ENCODE measurements at regions of chr15 and their contacts with region 1.

Region 1: GRCh38 chr15:77821188-77821958 is 188.7 kb upstream of the LINGO1 start:
- DNase-seq: peak; percentile 82
- ATAC-seq: peak; percentile 72
- H3K4me3 Mint-ChIP-seq: peak overlapping the region; percentile 52; the same call in 1 of the 2 replicates
- H3K27ac Mint-ChIP-seq: no peak overlapping the region
- H3K4me1 Mint-ChIP-seq: peaks cover 29% of the 10 kb centered on the region
- H3K27me3 Mint-ChIP-seq: peaks cover 46% of the 10 kb centered on the region
- CTCF ChIP-seq: peak; percentile 42; the same call in 1 of the 2 replicates

Region 2: DNA sequence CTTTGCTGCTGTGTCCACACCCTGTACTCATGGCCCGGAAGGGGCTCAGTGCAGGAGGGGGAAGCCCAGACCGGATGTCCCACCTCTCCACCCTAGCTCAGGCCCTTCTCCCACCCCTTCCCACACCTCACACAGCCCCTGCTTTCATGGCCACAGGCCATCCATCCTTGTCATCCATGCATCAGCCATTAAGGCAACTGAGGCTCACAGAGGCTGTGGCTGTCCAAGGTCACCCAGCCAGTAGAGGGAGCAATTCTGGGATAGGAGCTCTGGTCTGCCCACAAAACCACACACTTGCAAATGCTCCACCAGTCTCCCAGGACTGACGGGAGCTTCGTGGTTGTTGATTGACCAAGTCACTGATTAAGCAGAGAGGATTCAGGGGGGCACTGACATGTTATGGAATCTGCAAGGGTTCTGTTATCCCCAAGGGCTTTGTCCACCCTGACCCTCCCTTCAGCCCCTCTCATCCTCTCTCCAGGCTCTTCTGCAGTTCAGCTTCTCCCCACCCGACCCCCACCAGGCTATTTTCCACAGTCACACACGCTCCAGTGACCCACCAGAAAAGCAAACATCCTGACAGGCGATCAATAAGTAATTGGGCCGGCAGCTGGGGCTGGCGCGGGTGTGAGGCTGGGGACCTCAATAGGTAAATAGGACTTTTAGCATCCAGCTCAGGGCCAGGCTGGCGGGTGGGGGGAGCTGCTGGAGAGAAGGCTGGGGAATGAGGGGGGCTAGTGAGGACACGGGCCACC is 203.7 kb before region 1 on chr15:
- CTCF ChIA-PET with region 1: interaction called, 30 read pairs
- POLR2A ChIA-PET with region 1: no interaction called
- DNase-seq: peak; percentile 56
- ATAC-seq: peak; percentile 49
- H3K4me3 Mint-ChIP-seq: no peak overlapping the region
- H3K27ac Mint-ChIP-seq: no peak overlapping the region; the same call in 1 of the 2 replicates
- H3K4me1 Mint-ChIP-seq: peaks cover 41% of the 10 kb centered on the region
- H3K27me3 Mint-ChIP-seq: no peaks in the 10 kb centered on the region; the same call in 1 of the 2 replicates
- CTCF ChIP-seq: peak; percentile 19; the same call in 1 of the 2 replicates

Region 3: DNA sequence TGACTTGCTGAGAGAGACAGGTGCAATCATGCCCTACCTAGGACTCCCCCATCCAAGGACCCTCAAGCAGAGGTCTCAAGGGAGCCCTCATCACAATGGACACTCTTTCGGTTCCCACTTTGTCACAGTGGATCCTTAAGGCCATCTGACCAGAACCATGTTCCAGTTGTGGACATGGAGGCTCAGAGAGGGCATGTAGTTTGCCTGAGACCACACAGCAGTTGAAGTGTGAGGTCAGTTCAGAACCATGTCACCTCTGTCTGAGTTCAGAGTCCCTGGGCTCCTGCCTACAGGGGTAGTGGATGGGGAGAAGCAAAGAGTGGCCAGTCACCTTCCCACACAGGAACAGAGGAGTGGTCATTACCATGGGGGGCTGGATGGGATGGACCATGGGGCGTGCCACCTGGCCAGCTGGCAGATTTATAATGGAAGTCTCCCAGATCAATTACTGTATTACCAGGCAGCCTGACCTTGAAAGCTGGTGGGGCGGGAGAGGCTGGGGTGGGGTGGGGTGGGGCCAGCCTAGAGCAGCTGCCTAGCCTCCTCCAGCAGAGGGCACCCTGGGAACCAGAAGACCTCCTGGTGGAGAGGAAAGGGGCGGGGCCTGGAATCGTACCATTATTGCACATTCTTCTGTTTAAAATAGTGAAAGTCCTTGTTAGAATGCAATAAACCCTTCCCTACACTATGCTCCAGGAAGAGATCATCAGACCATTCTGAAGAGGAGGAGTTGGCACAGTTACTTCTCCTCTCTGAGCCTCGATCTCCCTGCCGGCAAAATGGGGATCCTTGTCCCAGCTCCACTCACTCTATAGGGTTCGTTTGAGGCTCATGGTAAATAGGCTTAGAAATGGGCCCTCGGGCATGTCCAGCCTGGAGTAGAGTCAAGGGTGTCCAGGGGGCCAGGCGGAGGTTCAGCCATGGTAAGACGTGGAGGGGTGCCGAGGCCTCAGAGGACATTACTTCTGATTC is 161.7 kb before region 1 on chr15:
- CTCF ChIA-PET with region 1: interaction called, 131 read pairs
- POLR2A ChIA-PET with region 1: no interaction called
- DNase-seq: peak; percentile 77
- ATAC-seq: peak; percentile 46
- H3K4me3 Mint-ChIP-seq: no peak overlapping the region
- H3K27ac Mint-ChIP-seq: no peak overlapping the region
- H3K4me1 Mint-ChIP-seq: peaks cover 29% of the 10 kb centered on the region
- H3K27me3 Mint-ChIP-seq: no peaks in the 10 kb centered on the region; the same call in 1 of the 2 replicates
- CTCF ChIP-seq: no peak

Region 4: GRCh38 chr15:77738441-77739302 is 82.7 kb before region 1 on chr15:
- CTCF ChIA-PET with region 1: interaction called, 25 read pairs
- POLR2A ChIA-PET with region 1: no interaction called
- DNase-seq: peak; percentile 40
- ATAC-seq: peak; percentile 10
- H3K4me3 Mint-ChIP-seq: peak overlapping the region; percentile 52
- H3K27ac Mint-ChIP-seq: no peak overlapping the region
- H3K4me1 Mint-ChIP-seq: peaks cover 46% of the 10 kb centered on the region
- H3K27me3 Mint-ChIP-seq: no peaks in the 10 kb centered on the region; the same call in 1 of the 2 replicates
- CTCF ChIP-seq: no peak

Region 5: DNA sequence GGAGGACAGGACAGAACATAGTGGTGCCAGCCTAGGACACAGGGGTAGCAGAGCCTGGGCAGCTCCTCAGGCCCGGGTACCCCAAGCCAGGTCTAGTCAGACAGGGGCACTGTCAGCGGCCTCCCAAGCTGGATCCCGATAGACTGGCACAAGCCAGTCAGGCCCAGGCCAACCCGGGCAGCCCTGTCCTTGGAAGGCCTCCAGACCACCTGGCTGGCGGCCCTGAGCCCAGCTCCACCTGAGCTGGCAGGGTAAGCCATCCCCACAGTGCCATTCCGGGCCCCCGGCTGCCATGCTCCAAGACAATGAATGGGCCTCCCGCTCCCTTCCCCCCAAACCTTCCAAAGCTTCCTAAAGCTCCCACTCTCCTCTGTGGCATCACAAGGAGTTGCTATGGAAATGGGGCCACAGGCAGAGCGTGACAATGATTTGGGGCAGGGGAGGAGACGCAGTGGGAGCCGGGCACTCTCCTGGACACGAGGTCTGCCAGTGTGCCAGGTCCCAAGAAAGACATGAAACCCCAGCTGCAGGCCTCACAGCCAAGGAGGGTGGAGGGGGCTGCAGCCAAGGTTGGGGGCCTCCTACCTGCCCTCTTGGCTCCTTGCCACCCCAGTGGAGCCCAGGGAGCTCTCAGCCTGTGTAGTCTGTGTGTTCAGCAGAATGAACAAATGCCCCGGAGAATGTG is 23.1 kb before region 1 on chr15:
- CTCF ChIA-PET with region 1: interaction called, 22 read pairs
- POLR2A ChIA-PET with region 1: no interaction called
- DNase-seq: no peak
- ATAC-seq: no peak
- H3K4me3 Mint-ChIP-seq: no peak overlapping the region
- H3K27ac Mint-ChIP-seq: no peak overlapping the region
- H3K4me1 Mint-ChIP-seq: peaks cover 14% of the 10 kb centered on the region
- H3K27me3 Mint-ChIP-seq: no peaks in the 10 kb centered on the region
- CTCF ChIP-seq: no peak

Region 6: GRCh38 chr15:77870195-77871065 is 49.1 kb after region 1 on chr15:
- CTCF ChIA-PET with region 1: interaction called, 20 read pairs
- POLR2A ChIA-PET with region 1: no interaction called
- DNase-seq: peak; percentile 92
- ATAC-seq: peak; percentile 78
- H3K4me3 Mint-ChIP-seq: no peak overlapping the region
- H3K27ac Mint-ChIP-seq: no peak overlapping the region
- H3K4me1 Mint-ChIP-seq: peaks cover 4% of the 10 kb centered on the region; the same call in 1 of the 2 replicates
- H3K27me3 Mint-ChIP-seq: no peaks in the 10 kb centered on the region; the same call in none of the 2 replicates
- CTCF ChIP-seq: peak; percentile 90

Measured in WTC11 (cell line).